Ovary (tissue), 10 donors: ENCODE measurements at regions of chr16 and their contacts with region 1.

Region 1: DNA sequence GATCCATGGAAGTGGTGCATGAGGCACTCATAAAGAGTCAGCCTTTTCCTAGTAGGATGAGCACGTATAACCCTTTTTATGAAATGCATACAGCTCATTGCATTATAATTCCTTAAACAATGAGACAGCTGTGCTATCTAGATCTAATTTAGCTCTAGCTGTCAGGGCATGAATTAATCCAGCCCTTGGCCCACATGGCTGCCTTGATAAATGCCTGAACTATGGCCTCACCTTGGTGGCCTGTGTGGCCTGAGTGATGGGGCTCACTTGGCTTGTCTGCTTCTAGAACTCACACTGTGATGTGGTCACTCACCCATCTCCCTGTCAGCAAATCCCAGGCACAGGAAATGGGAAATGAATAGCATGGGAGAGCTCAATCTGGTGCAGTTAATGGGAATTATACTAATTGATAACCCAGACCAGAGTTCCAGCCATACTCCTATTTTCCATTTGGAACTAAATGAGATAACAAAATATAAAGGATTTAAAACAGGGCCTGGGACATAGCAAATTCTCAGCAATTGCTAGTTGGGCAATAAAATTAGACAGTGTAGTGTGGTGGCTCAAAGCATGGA is 153.6 kb downstream of the HS3ST2 start:
- DNase-seq: no peak
- H3K4me3 ChIP-seq: no peak overlapping the region
- H3K27ac ChIP-seq: no peak overlapping the region
- H3K4me1 ChIP-seq: no peaks in the 10 kb centered on the region
- H3K27me3 ChIP-seq: no peaks in the 10 kb centered on the region
- CTCF ChIP-seq: no peak
- EP300 ChIP-seq: no peak
- POLR2A ChIP-seq: no peak

Region 2: DNA sequence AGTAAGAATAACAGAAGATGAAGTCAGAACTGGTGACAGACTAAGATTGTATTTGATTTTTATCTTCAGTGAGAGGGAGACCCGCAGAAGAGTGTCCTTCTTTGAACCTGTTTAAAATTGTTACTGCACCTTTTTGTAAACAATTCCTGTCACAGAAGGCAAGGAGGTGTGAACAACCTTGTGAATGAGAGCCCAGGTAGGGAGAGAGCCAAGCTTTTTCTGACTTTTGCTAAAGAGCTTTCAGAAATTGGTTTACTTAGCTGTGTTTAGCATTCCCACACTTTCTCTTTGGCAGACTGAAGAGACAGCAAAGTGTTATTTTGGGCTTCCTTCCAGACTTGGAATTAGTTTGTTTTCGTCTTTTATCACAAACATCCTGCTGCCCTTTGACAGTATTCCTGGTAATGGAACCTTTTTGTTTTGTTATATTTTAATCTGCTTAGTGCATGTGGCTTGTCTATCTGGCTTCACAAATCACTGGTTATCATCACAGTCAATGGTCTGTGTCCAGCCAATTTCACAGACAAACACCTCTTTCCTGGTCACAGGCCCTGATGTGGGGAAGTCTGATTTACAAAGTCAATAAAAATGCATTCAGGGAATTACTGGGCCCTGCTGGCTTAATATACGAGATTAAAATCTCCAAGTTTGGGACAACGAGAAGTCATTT is 239.3 kb before region 1 on chr16:
- intact Hi-C with region 1: no loop called
- DNase-seq: no peak
- H3K4me3 ChIP-seq: no peak overlapping the region
- H3K27ac ChIP-seq: no peak overlapping the region
- H3K4me1 ChIP-seq: peaks cover 6% of the 10 kb centered on the region
- H3K27me3 ChIP-seq: no peaks in the 10 kb centered on the region
- CTCF ChIP-seq: no peak
- EP300 ChIP-seq: no peak
- POLR2A ChIP-seq: no peak

Region 3: DNA sequence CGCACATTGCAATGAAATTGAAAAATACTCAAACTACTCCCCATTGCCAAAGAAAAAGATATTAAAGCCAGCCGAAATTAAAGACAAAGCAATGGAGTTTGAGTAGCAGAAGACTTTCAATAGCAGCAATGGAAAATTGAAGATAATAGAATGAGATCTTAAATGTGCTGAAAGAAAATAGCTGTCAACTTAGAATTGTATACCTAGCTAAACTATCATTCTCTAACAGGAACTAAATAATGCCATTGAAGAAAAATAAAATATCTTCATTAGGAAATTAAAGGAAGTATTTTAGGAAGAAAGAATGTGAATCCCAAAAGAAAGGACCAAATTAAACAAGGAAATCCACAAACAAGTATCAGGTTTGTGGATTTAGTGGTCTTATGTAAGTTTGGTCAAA is 16.0 kb after region 1 on chr16:
- intact Hi-C with region 1: loop called in 1 of 4 experiments (anchors 2 kb)
- DNase-seq: no peak
- H3K4me3 ChIP-seq: no peak overlapping the region
- H3K27ac ChIP-seq: no peak overlapping the region
- H3K4me1 ChIP-seq: no peaks in the 10 kb centered on the region
- H3K27me3 ChIP-seq: no peaks in the 10 kb centered on the region
- CTCF ChIP-seq: no peak
- EP300 ChIP-seq: no peak
- POLR2A ChIP-seq: no peak